WTC11 (cell line): ENCODE measurements at regions of chr9 and their contacts with region 1.

Region 1: GRCh38 chr9:126482361-126483044 is 131.2 kb upstream of the LMX1B start:
- DNase-seq: peak; percentile 64
- ATAC-seq: peak; percentile 79
- H3K4me3 Mint-ChIP-seq: peak overlapping the region; percentile 60
- H3K27ac Mint-ChIP-seq: no peak overlapping the region
- H3K4me1 Mint-ChIP-seq: no peaks in the 10 kb centered on the region; the same call in 1 of the 2 replicates
- H3K27me3 Mint-ChIP-seq: no peaks in the 10 kb centered on the region; the same call in 1 of the 2 replicates
- CTCF ChIP-seq: no peak

Region 2: GRCh38 chr9:126456441-126457174 is 25.9 kb before region 1 on chr9:
- CTCF ChIA-PET with region 1: interaction called, 14 read pairs
- POLR2A ChIA-PET with region 1: interaction called, 3 read pairs
- DNase-seq: no peak
- ATAC-seq: no peak
- H3K4me3 Mint-ChIP-seq: no peak overlapping the region
- H3K27ac Mint-ChIP-seq: 0 out of 2 replicates have a peak overlapping the region, but pooled peaks have one; percentile 47
- H3K4me1 Mint-ChIP-seq: peaks cover 19% of the 10 kb centered on the region
- H3K27me3 Mint-ChIP-seq: no peaks in the 10 kb centered on the region
- CTCF ChIP-seq: no peak

Region 3: GRCh38 chr9:126471084-126471624 is 11.3 kb before region 1 on chr9:
- CTCF ChIA-PET with region 1: interaction called, 23 read pairs
- POLR2A ChIA-PET with region 1: no interaction called
- DNase-seq: no peak
- ATAC-seq: 0 out of 2 replicates have a peak, but pooled peaks have one; percentile 21
- H3K4me3 Mint-ChIP-seq: no peak overlapping the region
- H3K27ac Mint-ChIP-seq: peak overlapping the region; percentile 58
- H3K4me1 Mint-ChIP-seq: peaks cover 30% of the 10 kb centered on the region
- H3K27me3 Mint-ChIP-seq: no peaks in the 10 kb centered on the region
- CTCF ChIP-seq: no peak

Region 4: DNA sequence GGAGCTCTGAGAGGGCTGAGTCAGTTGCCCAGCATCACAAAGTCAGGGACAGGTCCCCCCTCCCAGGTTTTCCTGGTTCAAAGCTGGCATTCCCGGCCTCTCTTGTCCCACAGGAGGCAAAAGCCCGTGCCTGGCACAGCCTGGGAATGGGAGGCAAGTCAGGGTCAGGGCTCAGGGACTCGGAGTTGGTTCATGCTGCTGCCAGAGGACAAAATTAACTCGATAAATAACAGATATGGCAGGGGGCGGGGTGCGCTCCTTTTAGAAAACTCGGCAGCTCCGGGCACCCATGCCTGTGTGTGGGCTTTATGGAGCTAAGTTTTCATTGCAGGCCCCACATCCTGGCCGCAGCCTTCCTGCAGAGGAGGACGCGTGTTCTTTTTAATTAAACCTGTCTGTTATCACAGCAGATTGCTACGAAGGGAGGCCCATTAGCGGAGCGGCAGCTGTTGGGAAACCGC is 68.4 kb after region 1 on chr9:
- CTCF ChIA-PET with region 1: interaction called, 14 read pairs
- POLR2A ChIA-PET with region 1: no interaction called
- DNase-seq: no peak
- ATAC-seq: no peak
- H3K4me3 Mint-ChIP-seq: no peak overlapping the region
- H3K27ac Mint-ChIP-seq: no peak overlapping the region
- H3K4me1 Mint-ChIP-seq: no peaks in the 10 kb centered on the region
- H3K27me3 Mint-ChIP-seq: no peaks in the 10 kb centered on the region; the same call in 1 of the 2 replicates
- CTCF ChIP-seq: no peak

Region 5: GRCh38 chr9:126564711-126565110 is 82.2 kb after region 1 on chr9:
- CTCF ChIA-PET with region 1: no interaction called
- POLR2A ChIA-PET with region 1: no interaction called
- DNase-seq: peak; percentile 61
- ATAC-seq: peak; percentile 88
- H3K4me3 Mint-ChIP-seq: no peak overlapping the region
- H3K27ac Mint-ChIP-seq: no peak overlapping the region
- H3K4me1 Mint-ChIP-seq: no peaks in the 10 kb centered on the region
- H3K27me3 Mint-ChIP-seq: no peaks in the 10 kb centered on the region; the same call in 1 of the 2 replicates
- CTCF ChIP-seq: peak; percentile 37; the same call in 1 of the 2 replicates